HEK293T (cell line): ENCODE measurements at regions of chr2 and their contacts with region 1.

Region 1: DNA sequence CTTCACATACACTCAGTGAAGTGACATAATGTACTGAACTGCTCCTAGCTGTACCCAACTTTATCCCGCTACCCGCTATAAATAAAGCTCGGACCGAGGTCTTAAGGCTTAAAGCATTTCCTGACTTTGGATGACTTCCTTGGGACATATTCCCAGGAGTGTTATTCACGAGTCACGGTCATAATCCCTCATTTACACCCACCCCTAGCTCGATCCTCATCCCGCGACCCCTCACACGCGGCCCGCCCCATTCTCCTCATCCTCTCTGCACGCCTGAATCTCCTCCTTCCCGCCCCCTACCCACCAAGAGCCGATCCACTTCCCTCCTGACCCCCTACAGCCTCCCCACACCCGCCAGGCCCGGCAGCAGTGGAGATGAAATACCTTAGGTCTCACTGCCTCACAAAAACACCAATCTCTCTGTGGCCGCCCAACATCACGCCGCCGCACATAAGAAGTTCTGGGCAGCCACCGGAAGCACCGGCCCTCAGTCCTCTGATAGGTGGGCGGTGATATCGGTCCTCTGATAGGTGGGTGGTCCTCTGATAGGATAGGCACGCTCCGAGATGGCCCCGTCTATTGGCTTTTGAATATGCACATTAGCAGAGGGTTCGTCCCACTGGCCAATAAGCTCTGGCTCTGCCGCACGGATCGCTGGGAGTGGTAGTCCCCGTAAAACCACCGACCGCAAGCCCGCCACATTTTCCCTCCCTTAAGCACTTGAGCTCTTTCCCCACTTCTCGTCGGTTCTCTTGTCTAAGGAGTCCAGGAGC is at the start of gene WDCP:
- DNase-seq: peak; percentile 91

Region 2: GRCh38 chr2:23939987-23940717 is 107.0 kb before region 1 on chr2 and contains the start of gene UBXN2A:
- CTCF ChIA-PET with region 1: no interaction called
- POLR2A ChIA-PET with region 1: interaction called, 12 read pairs
- DNase-seq: peak; percentile 87

Region 3: DNA sequence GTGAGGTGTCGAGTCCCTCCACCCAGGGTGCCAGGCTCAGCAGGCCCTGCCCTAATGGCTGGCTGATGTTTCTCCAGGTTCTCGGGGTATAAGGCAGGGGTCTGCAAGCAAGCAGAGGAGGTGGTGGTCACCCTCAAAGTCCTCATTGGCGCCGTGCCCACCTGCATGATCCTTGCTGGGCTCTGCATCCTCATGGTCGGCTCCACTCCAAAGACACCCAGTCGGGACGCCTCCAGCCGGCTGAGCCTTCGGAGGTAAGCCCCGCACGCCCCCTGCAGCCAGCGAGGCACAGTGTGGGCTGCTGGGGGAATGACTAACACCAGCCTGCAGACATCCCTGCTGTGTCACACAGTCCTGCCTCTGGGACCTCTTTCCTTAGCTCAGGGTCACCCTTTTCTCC is 23.1 kb before region 1 on chr2:
- CTCF ChIA-PET with region 1: interaction called, 4 read pairs
- POLR2A ChIA-PET with region 1: interaction called, 11 read pairs
- DNase-seq: peak; percentile 49

Region 4: DNA sequence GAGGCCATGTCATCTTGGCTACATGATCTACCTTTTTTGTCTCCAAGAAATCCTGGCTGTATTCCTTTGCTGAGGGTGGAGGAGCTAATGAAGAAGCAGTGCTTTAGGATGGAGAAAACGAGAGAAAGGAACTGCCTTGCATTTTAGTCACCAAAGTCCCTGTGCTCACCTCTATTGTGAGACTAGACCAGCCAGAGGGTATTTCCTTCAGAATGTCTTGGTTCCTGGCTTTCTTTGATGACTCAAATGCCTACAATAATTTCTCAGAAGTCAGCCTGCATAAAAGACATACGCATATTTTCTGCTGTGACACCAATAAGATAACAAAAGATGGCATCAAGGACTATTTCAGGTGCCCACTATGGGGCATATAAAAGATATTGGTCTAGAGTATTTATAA is 18.2 kb after region 1 on chr2:
- CTCF ChIA-PET with region 1: no interaction called
- POLR2A ChIA-PET with region 1: interaction called, 13 read pairs
- DNase-seq: no peak

Region 5: DNA sequence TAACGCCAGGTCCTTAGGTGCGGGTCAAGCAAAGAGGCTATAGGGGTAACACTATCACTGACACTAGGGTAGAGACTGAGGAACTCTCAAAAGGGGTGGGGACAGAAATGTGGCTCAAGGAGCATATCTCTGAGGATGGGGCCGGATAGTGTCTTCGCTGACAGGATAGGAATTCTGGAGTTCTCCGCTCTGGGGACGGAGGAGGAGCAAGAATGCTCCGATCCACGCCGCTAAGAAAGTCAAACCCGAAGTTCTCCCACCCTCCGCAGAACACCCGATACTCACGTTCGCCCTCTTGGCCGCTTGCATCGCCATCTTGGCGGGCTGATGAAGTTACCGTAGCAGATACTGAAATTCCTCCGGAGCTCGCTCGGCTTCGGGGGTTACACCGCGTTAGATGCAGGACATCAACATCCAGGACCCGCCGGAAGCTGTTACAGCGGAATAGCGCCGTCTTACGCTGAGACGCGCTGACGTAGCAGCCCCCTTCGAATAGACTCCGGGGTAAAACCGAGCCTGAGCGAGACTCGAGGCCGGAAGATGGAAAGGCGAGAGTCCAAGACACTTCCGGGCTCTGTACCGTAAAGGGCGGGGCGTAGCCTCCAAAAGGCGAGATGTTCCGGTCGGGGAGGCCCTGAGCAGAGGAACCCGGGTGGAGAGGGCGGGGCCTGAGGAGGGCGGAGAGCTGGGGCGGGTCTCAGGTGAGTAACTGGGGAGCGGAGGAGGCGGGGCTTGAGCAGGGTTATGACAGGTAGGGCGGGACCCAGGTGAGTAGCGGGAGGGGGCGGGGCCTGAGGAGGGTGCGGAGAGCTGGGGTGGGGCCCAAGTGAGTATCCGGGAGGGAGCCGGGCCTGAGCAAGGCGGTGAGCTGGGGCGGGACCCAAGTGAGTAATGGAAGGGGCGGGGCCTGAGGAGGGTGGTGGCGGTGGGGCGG is 29.1 kb after region 1 on chr2 and contains the start of gene SF3B6:
- CTCF ChIA-PET with region 1: no interaction called
- POLR2A ChIA-PET with region 1: interaction called, 27 read pairs
- DNase-seq: peak; percentile 93

Region 6: DNA sequence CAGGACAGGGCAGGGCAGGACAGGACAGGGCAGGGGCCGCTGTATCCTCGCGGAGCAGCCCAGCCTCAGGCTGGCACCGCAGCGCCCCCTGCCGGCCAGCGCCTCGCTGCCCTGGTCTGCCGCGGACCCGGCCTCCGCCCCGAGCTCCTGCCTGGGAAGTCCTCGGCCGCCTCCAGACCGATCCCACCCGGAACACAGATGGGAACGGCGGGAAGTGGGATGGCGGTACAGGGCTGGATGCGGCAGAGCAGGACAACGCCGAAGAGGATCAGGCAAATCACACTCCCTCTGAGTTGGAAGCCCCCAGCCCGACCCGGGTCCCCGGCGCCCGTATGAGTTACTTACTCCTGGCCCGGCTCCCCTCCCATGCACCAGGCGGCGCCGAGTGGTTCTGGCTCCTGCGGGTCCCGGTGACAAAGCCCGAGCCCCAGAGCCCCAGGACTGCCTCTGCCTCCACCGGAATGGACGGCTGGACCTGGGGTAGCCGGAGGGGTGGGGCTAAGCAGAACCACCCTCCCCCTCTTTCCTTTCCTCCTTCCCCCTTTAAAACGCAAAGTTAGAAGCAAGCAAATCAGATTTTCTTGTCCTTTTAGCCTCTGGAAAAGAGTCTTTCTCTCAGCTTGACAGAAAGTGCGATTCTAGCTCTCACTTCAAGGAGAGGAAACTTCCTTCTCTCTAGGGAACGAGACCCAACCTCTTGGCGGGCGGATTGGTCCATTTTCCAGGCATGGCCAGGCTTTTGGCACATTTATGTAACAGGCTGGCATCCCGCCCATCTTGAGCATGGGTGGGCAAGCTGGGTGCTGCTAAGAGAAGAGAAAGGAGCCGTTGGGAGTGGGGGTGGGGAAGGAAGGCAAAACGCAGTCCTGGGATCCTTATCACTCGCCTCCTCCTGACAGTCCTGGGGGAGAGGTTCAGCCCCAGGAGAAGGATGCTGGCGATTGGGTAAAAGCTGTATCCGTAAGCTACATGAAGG is 37.6 kb after region 1 on chr2 and contains the start of gene TP53I3:
- CTCF ChIA-PET with region 1: interaction called, 3 read pairs
- POLR2A ChIA-PET with region 1: interaction called, 14 read pairs
- DNase-seq: peak; percentile 92